A549 (cell line): ENCODE measurements at regions of chrX and their contacts with region 1.

Region 1: GRCh38 chrX:110407910-110408545 is 49.4 kb downstream of the RTL9 start:
- DNase-seq: peak; percentile 54 to 62
- ATAC-seq: peak; percentile 70 to 89; a peak in 5 of 6 replicates
- H3K4me3 ChIP-seq: no peak overlapping the region
- H3K27ac ChIP-seq: peak overlapping the region; percentile 45 to 67; a peak in 4 of 6 replicates
- H3K4me1 ChIP-seq: peaks cover 25% of the 10 kb centered on the region
- CTCF ChIP-seq: peak; percentile 80
- EP300 ChIP-seq: no peak
- POLR2A ChIP-seq: no peak
- RAD21 ChIP-seq: peak; percentile 86 to 89

Region 2: GRCh38 chrX:110383414-110383813 is 24.6 kb before region 1 on chrX:
- CTCF ChIA-PET with region 1: interaction called, 12 read pairs
- POLR2A ChIA-PET with region 1: no interaction called
- DNase-seq: no peak
- ATAC-seq: peak in 1 of 2 experiments; percentile 55; a peak in 2 of 6 replicates
- H3K4me3 ChIP-seq: no peak overlapping the region
- H3K27ac ChIP-seq: no peak overlapping the region; a peak in 1 of 6 replicates
- H3K4me1 ChIP-seq: peaks cover 7% of the 10 kb centered on the region; the same call in 1 of the 3 replicates
- CTCF ChIP-seq: no peak
- EP300 ChIP-seq: no peak
- POLR2A ChIP-seq: no peak
- RAD21 ChIP-seq: no peak

Region 3: DNA sequence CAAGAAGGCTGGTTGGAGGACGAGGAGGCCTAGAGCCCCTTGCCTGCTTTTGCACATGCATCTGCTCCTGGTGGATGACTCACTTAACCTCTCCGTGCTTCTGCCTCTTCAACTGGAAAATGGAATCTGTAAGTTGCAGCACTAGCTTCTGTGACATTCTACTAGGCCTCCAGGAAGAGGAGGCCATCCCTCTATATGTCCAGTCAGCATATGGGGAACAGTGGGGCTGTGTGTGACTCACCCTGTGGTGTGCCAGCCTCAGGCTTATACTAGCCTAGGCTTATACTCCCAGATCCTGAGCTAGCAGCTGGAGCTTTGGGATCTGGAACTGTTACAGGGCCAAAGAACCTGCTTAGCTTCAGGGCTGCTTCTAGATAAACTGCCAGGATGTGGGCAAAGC is 13.4 kb before region 1 on chrX:
- CTCF ChIA-PET with region 1: interaction called, 21 read pairs
- POLR2A ChIA-PET with region 1: no interaction called
- DNase-seq: no peak
- ATAC-seq: peak; percentile 37 to 61; a peak in 3 of 6 replicates
- H3K4me3 ChIP-seq: no peak overlapping the region
- H3K27ac ChIP-seq: peak overlapping the region in 1 of 2 experiments; percentile 16; a peak in 1 of 6 replicates
- H3K4me1 ChIP-seq: peaks cover 28% of the 10 kb centered on the region
- CTCF ChIP-seq: no peak
- EP300 ChIP-seq: no peak
- POLR2A ChIP-seq: no peak
- RAD21 ChIP-seq: no peak

Region 4: GRCh38 chrX:110418316-110419235 is 10.5 kb after region 1 on chrX:
- CTCF ChIA-PET with region 1: interaction called, 43 read pairs
- POLR2A ChIA-PET with region 1: no interaction called
- DNase-seq: peak; percentile 49 to 59
- ATAC-seq: peak; percentile 85 to 89
- H3K4me3 ChIP-seq: no peak overlapping the region
- H3K27ac ChIP-seq: no peak overlapping the region
- H3K4me1 ChIP-seq: peaks cover 11% of the 10 kb centered on the region; the same call in 1 of the 3 replicates
- CTCF ChIP-seq: no peak; the same call in 2 of the 3 replicates
- EP300 ChIP-seq: no peak
- POLR2A ChIP-seq: no peak
- RAD21 ChIP-seq: peak; percentile 48 to 55; a peak in 4 of 5 replicates